ENCODE measurements at regions of chr17 and their contacts with region 1.

Region 1: DNA sequence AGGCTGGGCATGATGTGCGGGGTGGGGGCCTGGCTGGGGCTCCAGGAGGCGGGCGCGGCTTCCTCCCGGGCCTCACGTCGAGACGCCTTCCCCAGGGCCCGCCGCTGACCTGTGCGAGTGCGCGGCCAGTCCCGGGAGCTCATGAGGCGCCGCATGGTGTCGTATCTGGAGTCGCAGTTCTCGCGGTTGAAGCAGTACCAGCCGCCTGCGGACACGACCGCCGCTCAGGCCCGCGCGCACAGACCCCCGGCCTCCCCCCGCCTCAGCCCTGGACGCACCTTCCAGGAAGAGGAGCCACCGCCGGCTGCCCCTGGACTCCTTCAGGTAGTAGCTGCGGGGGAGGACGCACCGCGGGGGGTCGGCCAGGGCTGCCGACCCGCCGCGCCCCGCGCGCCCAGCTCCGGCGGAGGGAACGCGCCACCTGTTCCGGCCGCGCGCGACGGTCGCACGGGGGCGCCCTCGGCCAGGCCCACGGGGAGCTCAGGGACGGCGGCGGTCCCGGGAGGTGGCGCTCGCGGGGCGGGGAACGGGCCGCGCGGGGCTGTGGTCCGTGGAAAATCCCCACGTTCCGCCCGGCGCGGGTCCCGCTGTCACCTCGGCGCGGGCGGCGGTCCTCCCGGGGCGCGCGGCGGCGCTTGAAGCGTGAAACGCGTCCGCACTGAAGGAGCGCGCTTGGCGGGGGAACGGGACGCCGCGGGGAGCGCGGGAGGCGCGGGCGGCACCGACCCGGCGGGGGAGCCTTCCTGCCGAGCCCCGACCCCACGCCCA is 1.4 kb downstream of the NOTUM start:
- DNase-seq: no peak
- H3K4me3 ChIP-seq: peak overlapping the region; percentile 29 to 72 (median 42)
- H3K27ac ChIP-seq: no peak overlapping the region
- H3K4me1 ChIP-seq: peaks cover 12 to 44% (median 32%) of the 10 kb centered on the region in 3 donors
- H3K27me3 ChIP-seq: peaks cover 17 to 95% (median 24%) of the 10 kb centered on the region in 4 donors
- CTCF ChIP-seq: peak; percentile 30 to 99 (median 96)
- POLR2A ChIP-seq: no peak

Region 2: DNA sequence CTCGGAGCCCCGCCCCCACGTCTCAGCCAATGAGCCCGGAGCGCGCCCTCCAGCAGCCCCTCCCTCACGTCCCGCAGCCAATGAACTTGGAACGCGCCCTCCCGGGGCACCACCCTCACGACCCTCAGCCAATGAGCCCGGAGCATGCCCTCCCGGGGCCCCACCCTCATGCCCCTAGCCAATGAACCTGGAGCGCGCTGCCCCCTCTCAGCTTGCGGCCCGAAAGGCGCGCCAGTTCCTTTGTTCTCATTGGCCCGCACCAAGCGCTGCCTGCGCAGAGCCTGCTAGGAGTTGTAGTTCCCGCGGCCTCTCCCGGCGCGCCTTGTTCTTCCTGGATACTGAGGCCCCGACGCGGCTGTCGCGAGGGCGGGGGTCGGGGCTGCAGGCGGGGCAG is 63.4 kb after region 1 on chr17 and contains the start of gene LRRC45:
- intact Hi-C with region 1: loop called (anchors 2 kb)
- DNase-seq: peak; percentile 99
- H3K4me3 ChIP-seq: peak within 1 kb of the TSS; percentile 62 to 97 (median 82)
- H3K27ac ChIP-seq: peak within 1 kb of the TSS; percentile 75 to 88 (median 84)
- H3K4me1 ChIP-seq: peaks cover 25 to 52% (median 30%) of the 10 kb centered on the region in 3 donors
- H3K27me3 ChIP-seq: no peaks in the 10 kb centered on the region
- CTCF ChIP-seq: no peak
- POLR2A ChIP-seq: no peak
- total RNA-seq, gene LRRC45: 9.7 to 21.2 (median 18.3) TPM

Region 3: DNA sequence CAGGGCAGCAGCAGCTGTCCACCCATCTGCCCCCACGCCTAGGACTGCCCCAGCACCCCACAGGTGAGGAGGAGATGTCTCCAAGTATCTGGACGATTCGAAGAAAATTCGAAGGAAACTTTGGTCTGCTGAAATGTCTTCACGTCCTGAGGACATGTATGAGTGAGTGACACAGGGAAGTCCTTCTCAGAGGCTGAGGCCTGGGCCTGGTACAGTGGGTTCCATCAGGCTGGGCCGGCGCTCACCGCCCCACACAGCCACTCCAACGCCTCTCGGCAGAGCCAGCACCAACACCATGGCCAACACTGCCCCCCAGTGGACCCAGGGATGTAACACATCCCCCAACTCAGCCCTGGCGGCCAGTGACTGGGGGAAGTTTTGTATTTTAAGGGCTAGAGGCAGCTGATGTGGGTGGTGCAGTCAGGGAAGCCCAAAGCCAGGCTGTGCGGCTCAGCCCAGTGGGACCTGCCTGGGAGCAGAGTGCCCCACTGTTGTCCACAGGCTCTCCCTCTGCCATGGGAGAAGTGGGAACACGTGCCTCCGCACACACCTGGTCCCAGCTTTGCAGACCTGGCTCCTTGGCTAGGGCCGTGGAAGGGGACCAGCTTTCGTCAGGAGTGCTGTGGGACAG is 194.3 kb after region 1 on chr17:
- intact Hi-C with region 1: loop called (anchors 10 kb)
- DNase-seq: peak; percentile 31
- H3K4me3 ChIP-seq: no peak overlapping the region
- H3K27ac ChIP-seq: peak overlapping the region in 3 of 4 donors; percentile 47 to 81 (median 75)
- H3K4me1 ChIP-seq: peaks cover 0 to 33% (median 17%) of the 10 kb centered on the region in 3 donors
- H3K27me3 ChIP-seq: no peaks in the 10 kb centered on the region
- CTCF ChIP-seq: peak; percentile 67 to 97 (median 94)
- POLR2A ChIP-seq: no peak

Region 4: GRCh38 chr17:82170412-82170961 is 210.9 kb after region 1 on chr17:
- intact Hi-C with region 1: no loop called
- DNase-seq: no peak
- H3K4me3 ChIP-seq: no peak overlapping the region
- H3K27ac ChIP-seq: no peak overlapping the region
- H3K4me1 ChIP-seq: peaks cover 0 to 3% (median 0%) of the 10 kb centered on the region in 3 donors
- H3K27me3 ChIP-seq: no peaks in the 10 kb centered on the region
- CTCF ChIP-seq: no peak
- POLR2A ChIP-seq: no peak

Measured in esophagus squamous epithelium (tissue), 5 donors.